ENCODE measurements at regions of chr15 and their contacts with region 1.

Region 1: GRCh38 chr15:81924729-81925128 is 121.1 kb downstream of the MEX3B start:
- DNase-seq: no peak
- H3K4me3 Mint-ChIP-seq: no peak overlapping the region
- H3K27ac Mint-ChIP-seq: no peak overlapping the region
- H3K4me1 Mint-ChIP-seq: no peaks in the 10 kb centered on the region
- H3K27me3 Mint-ChIP-seq: no peaks in the 10 kb centered on the region
- CTCF ChIP-seq: no peak

Region 2: DNA sequence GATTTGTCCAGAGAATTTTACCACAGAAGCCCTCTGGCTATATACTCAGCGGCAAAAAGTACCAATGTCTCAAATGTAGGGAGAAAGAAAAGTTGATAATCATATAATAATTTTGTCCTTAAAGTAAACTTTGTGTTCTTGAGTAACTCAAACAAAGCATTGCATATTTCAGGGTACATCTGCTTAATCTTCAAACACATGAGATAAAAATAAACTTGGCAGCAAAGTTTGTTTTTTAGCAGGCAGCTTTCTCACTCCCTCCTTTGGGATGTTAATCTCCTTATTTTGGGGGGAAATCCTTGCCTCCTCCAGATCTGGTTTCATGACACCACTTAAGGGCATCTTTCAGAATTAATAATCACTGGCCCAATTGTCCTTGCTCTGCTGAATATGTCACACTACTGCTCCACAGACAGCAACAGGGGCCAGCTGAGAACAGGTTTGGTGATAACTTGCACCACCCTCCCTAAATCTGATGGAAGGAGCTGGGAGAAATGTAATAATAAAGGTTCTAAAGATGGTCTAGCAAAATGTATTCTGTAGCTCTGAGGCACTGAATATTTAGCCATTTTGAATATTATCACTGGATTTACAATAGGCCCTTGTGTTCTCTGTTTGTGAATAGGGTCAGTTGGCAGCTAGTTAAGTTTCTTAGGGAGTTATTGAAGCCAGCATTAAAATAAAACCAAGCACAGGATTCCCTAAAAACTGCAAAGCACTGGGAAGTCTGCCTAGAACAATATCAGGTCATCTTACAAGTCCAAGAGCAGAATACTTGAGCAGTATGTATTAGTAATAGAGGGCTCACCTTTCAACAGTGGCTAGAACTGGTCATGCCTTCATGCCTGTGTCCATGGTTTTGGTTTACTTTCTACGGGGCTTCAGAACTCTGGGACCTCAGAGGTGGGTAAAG is 258.6 kb after region 1 on chr15:
- CTCF ChIA-PET with region 1: no interaction called
- intact Hi-C with region 1: loop called (anchors 10 kb)
- DNase-seq: no peak
- H3K4me3 Mint-ChIP-seq: no peak overlapping the region
- H3K27ac Mint-ChIP-seq: no peak overlapping the region
- H3K4me1 Mint-ChIP-seq: peaks cover 16% of the 10 kb centered on the region
- H3K27me3 Mint-ChIP-seq: no peaks in the 10 kb centered on the region
- CTCF ChIP-seq: no peak

Measured in Calu3 (cell line).